ENCODE measurements at regions of chr2 and their contacts with region 1.

Region 1: DNA sequence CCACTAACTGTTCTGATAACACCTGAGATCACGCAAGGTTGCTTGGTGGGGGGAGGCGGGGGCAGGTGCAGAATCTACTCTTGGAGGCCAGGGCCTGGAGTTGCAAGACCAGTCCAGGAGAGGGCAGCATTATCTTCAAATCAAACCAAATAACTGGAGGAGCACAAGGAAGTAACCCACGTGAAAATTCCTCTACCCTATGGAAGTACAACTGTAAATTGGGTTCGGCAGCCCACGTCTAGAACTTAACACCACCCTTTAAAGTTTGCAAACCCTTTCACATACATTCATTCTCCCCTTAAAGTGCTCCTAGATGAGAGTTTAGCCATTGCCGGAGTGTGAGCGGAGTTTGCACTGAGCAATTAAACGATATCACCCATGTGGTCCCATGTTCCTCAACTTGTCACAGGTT is 19.6 kb upstream of the CXCR1 start:
- DNase-seq: peak; percentile 78 to 83
- H3K4me3 ChIP-seq: no peak overlapping the region
- H3K4me3 Mint-ChIP-seq: no peak overlapping the region
- H3K27ac Mint-ChIP-seq: no peak overlapping the region
- H3K4me1 ChIP-seq: peaks cover 13% of the 10 kb centered on the region
- H3K4me1 Mint-ChIP-seq: no peaks in the 10 kb centered on the region
- H3K27me3 ChIP-seq: no peaks in the 10 kb centered on the region; the same call in 1 of the 2 replicates
- H3K27me3 Mint-ChIP-seq: no peaks in the 10 kb centered on the region
- CTCF ChIP-seq: peak; percentile 82 to 87

Region 2: GRCh38 chr2:218216674-218217359 is 30.5 kb after region 1 on chr2 and contains the start of gene ARPC2:
- CTCF ChIA-PET with region 1: no interaction called
- POLR2A ChIA-PET with region 1: no interaction called
- intact Hi-C with region 1: loop called (anchors 1 kb)
- DNase-seq: peak; percentile 92 to 95
- H3K4me3 ChIP-seq: peak within 1 kb of the TSS; percentile 87
- H3K4me3 Mint-ChIP-seq: peak within 1 kb of the TSS; percentile 93
- H3K27ac Mint-ChIP-seq: peak within 1 kb of the TSS; percentile 92
- H3K4me1 ChIP-seq: peaks cover 30% of the 10 kb centered on the region
- H3K4me1 Mint-ChIP-seq: peaks cover 26% of the 10 kb centered on the region
- H3K27me3 ChIP-seq: no peaks in the 10 kb centered on the region
- H3K27me3 Mint-ChIP-seq: no peaks in the 10 kb centered on the region
- CTCF ChIP-seq: no peak
- total RNA-seq, gene ARPC2: 284 and 290 TPM in 2 replicates

Region 3: DNA sequence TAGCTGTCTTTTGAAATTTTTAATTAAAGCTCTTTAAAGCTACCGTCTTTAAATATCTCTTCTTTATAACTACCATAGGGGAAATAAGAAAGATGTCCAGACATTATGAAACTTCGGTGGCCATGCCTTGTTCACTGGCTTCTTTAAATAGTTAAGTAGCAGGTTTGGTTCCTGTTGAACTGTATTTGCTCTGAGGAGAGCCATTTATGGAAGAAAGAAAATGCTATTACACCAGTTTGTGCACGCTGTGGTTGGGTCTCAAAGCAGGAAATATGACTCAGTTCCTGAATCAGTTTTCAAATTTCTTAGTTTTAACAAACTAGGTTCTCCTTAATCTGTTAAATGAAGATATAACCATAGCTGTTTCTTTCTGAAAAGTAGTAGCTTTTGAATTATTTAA is 42.9 kb after region 1 on chr2:
- CTCF ChIA-PET with region 1: no interaction called
- POLR2A ChIA-PET with region 1: interaction called, 3 read pairs
- intact Hi-C with region 1: loop called (anchors 5 kb)
- DNase-seq: no peak
- H3K4me3 ChIP-seq: no peak overlapping the region
- H3K4me3 Mint-ChIP-seq: no peak overlapping the region
- H3K27ac Mint-ChIP-seq: no peak overlapping the region
- H3K4me1 ChIP-seq: peaks cover 40% of the 10 kb centered on the region
- H3K4me1 Mint-ChIP-seq: peaks cover 31% of the 10 kb centered on the region
- H3K27me3 ChIP-seq: no peaks in the 10 kb centered on the region
- H3K27me3 Mint-ChIP-seq: no peaks in the 10 kb centered on the region
- CTCF ChIP-seq: no peak

Region 4: GRCh38 chr2:218257390-218257981 is 71.1 kb after region 1 on chr2:
- CTCF ChIA-PET with region 1: interaction called, 3 read pairs
- POLR2A ChIA-PET with region 1: no interaction called
- intact Hi-C with region 1: loop called (anchors 1 kb)
- DNase-seq: peak; percentile 41 to 63
- H3K4me3 ChIP-seq: no peak overlapping the region
- H3K4me3 Mint-ChIP-seq: no peak overlapping the region
- H3K27ac Mint-ChIP-seq: peak overlapping the region; percentile 80
- H3K4me1 ChIP-seq: no peaks in the 10 kb centered on the region
- H3K4me1 Mint-ChIP-seq: peaks cover 5% of the 10 kb centered on the region
- H3K27me3 ChIP-seq: no peaks in the 10 kb centered on the region
- H3K27me3 Mint-ChIP-seq: no peaks in the 10 kb centered on the region
- CTCF ChIP-seq: peak; percentile 56 to 59